Stomach (tissue), 19 donors: ENCODE measurements at regions of chr9 and their contacts with region 1.

Region 1: GRCh38 chr9:133327834-133328484 is 8.0 kb downstream of the SURF6 start:
- DNase-seq: no peak
- H3K4me3 ChIP-seq: no peak overlapping the region
- H3K27ac ChIP-seq: no peak overlapping the region
- H3K4me1 ChIP-seq: no peaks in the 10 kb centered on the region
- H3K27me3 ChIP-seq: no peaks in the 10 kb centered on the region
- CTCF ChIP-seq: no peak
- EP300 ChIP-seq: no peak
- POLR2A ChIP-seq: no peak

Region 2: DNA sequence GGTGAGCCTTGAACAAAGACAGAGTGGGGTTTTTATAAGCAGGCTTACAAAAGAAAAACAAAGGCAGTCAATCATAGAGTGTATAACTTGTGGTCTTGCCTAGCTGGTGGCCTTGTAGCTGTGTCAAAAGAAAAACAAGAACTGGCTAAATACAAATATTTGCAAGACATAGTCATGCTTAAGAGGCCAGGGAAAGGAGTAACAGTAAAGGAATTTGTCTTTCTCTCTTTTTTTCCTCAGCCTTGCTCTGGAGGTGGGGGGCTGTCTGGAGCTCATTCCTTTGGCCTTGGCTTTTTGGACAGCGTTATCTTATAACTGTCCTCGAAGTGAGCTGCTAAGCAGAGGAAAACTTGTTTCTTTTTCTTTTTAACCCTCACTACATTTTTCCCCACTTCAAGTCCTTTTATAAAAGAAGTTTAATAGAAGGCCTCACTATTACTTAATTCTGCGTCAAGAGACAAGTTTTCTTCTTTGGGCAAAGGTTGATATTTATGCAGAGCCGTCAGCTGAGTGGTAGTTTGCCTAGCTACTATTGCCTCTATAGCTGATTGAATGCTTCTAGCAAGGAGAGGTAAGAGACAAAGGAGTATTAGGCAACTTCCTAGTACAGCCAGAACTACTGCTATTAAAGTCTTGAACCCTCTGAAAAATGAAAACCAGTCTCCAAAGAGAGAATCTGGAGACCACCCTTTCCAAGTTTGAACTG is 251.9 kb before region 1 on chr9:
- intact Hi-C with region 1: no loop called
- DNase-seq: peak in 1 of 2 donors; percentile 56
- H3K4me3 ChIP-seq: no peak overlapping the region
- H3K27ac ChIP-seq: no peak overlapping the region
- H3K4me1 ChIP-seq: peaks cover 0 to 5% (median 0%) of the 10 kb centered on the region in 4 donors
- H3K27me3 ChIP-seq: no peaks in the 10 kb centered on the region
- CTCF ChIP-seq: no peak
- EP300 ChIP-seq: no peak
- POLR2A ChIP-seq: no peak

Region 3: GRCh38 chr9:133184962-133185361 is 143.0 kb before region 1 on chr9:
- intact Hi-C with region 1: loop called (anchors 5 kb)
- DNase-seq: peak; percentile 46 to 88
- H3K4me3 ChIP-seq: no peak overlapping the region
- H3K27ac ChIP-seq: no peak overlapping the region
- H3K4me1 ChIP-seq: peaks cover 0 to 11% (median 6%) of the 10 kb centered on the region in 4 donors
- H3K27me3 ChIP-seq: peaks cover 0 to 62% (median 22%) of the 10 kb centered on the region in 3 donors
- CTCF ChIP-seq: peak in 5 of 7 experiments; percentile 30 to 49 (median 47)
- EP300 ChIP-seq: no peak
- POLR2A ChIP-seq: no peak

Region 4: GRCh38 chr9:133492061-133493021 is 164.4 kb after region 1 on chr9:
- intact Hi-C with region 1: no loop called
- DNase-seq: no peak
- H3K4me3 ChIP-seq: no peak overlapping the region
- H3K27ac ChIP-seq: peak overlapping the region in 4 of 5 donors; percentile 7 to 39 (median 24)
- H3K4me1 ChIP-seq: peaks cover 0 to 8% (median 0%) of the 10 kb centered on the region in 4 donors
- H3K27me3 ChIP-seq: peaks cover 0 to 41% (median 0%) of the 10 kb centered on the region in 3 donors
- CTCF ChIP-seq: no peak
- EP300 ChIP-seq: no peak
- POLR2A ChIP-seq: no peak